K562 (cell line): ENCODE measurements at regions of chr7 and their contacts with region 1.

Region 1: DNA sequence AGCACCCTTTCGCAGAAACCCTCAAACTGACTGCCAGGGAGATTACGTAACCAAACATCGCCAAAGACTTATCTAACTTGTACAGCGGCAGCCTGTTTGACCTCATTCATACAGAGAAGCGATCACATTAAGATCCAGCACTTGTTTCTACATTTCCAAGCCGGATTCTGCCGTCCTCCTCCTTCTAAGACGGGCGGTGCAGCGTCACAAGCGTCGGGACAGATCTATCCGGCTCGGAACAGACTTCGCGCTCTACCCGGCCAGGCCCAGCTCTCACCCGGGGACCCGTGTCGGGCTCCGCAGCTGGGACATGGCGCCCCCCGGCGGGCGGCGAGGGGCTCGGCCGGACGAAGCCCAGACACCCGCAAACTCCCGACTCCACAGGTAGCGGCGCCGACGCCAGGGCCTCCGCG is 373 bp downstream of the H2AZ2 start:
- DNase-seq: peak; percentile 87 to 91 (median 89)
- ATAC-seq: peak; percentile 75
- H3K4me3 ChIP-seq: peak overlapping the region; percentile 72
- H3K27ac ChIP-seq: peak overlapping the region; percentile 98
- H3K4me1 ChIP-seq: peaks cover 15% of the 10 kb centered on the region in 2 experiments; a peak in 4 of 5 replicates
- H3K27me3 ChIP-seq: no peaks in the 10 kb centered on the region
- CTCF ChIP-seq: peak; percentile 76 to 81 (median 79)
- EP300 ChIP-seq: peak; percentile 88; the same call in 1 of the 2 replicates
- POLR2A ChIP-seq: peak; percentile 65
- RAD21 ChIP-seq: peak; percentile 76 to 88

Region 2: DNA sequence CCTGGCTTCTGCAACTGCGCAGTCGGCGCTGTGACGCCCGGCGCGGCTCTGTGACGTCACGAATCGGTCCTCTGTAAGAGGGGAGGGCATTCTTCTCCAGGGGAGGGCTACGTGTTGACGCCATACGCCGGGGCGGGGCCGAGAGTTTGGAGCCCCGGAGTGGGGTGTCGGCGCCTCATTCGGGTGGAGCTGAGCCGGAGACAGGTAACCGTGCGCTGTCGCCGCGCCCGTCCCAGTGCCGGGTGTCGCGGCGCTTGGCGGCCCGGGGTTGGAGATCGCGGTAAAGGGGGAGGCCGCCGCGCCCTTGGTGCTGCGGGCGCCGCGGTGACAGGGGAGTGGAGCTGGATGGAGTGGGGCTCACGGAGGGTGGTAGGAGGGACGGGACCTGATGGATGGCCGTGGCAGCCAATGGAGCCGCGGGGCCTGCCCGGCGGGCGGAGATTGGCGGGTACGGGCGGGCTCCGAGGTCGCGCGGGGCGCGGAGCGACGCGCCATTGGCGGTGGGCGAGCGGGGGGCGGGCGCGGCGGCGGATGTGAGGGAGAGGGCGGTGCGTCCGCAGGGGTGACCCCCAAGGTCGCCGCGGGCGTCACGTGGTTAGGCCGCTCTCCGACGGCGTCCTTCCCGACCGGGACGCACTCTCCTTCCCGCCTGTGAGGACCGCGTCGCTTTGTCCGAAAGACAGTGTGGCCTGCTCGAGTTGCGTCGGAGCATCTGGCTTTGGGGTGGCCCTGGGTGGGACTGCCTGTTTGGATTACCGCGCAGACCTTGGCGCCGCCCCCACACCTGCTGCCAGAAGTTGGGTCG is 240.9 kb before region 1 on chr7 and contains the start of gene OGDH:
- CTCF ChIA-PET with region 1: no interaction called
- POLR2A ChIA-PET with region 1: interaction called, 9 read pairs
- in situ Hi-C with region 1: no loop called
- intact Hi-C with region 1: loop called (anchors 1 kb)
- DNase-seq: peak; percentile 99
- ATAC-seq: peak; percentile 99
- H3K4me3 ChIP-seq: peak within 1 kb of the TSS; percentile 77
- H3K27ac ChIP-seq: peak within 1 kb of the TSS; percentile 84
- H3K4me1 ChIP-seq: peaks cover 8 to 27% of the 10 kb centered on the region in 2 experiments; a peak in 4 of 5 replicates
- H3K27me3 ChIP-seq: no peaks in the 10 kb centered on the region
- CTCF ChIP-seq: no peak
- EP300 ChIP-seq: no peak
- POLR2A ChIP-seq: peak; percentile 98
- RAD21 ChIP-seq: no peak
- polyA plus RNA-seq, gene OGDH: 3.1 to 6.3 TPM

Region 3: DNA sequence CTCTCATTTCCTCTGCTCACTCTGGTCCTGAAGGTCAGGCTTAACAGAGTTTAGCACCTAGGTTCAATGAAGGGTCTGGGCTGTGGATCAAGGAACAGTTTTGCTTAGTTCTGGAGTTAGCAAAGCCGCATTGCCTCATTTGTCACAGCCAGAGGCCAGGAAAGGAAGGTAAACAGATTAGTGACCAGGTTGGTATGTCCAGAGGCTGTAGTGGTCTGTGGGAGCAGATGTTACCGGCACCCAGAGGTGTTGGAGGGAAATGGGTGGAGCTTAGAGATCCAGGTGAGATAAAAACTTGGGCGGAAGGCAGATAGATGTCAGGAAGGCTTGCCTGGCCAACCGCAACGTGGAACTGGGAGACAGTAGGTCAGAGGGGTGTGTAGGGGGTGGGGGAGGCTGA is 135.5 kb before region 1 on chr7:
- CTCF ChIA-PET with region 1: no interaction called
- POLR2A ChIA-PET with region 1: no interaction called
- in situ Hi-C with region 1: no loop called
- intact Hi-C with region 1: no loop called
- DNase-seq: peak; percentile 26 to 59 (median 50)
- ATAC-seq: peak; percentile 52
- H3K4me3 ChIP-seq: no peak overlapping the region
- H3K27ac ChIP-seq: no peak overlapping the region
- H3K4me1 ChIP-seq: peaks cover 12 to 13% of the 10 kb centered on the region in 2 experiments; a peak in 4 of 5 replicates
- H3K27me3 ChIP-seq: no peaks in the 10 kb centered on the region
- CTCF ChIP-seq: no peak
- EP300 ChIP-seq: no peak
- POLR2A ChIP-seq: no peak
- RAD21 ChIP-seq: no peak

Region 4: DNA sequence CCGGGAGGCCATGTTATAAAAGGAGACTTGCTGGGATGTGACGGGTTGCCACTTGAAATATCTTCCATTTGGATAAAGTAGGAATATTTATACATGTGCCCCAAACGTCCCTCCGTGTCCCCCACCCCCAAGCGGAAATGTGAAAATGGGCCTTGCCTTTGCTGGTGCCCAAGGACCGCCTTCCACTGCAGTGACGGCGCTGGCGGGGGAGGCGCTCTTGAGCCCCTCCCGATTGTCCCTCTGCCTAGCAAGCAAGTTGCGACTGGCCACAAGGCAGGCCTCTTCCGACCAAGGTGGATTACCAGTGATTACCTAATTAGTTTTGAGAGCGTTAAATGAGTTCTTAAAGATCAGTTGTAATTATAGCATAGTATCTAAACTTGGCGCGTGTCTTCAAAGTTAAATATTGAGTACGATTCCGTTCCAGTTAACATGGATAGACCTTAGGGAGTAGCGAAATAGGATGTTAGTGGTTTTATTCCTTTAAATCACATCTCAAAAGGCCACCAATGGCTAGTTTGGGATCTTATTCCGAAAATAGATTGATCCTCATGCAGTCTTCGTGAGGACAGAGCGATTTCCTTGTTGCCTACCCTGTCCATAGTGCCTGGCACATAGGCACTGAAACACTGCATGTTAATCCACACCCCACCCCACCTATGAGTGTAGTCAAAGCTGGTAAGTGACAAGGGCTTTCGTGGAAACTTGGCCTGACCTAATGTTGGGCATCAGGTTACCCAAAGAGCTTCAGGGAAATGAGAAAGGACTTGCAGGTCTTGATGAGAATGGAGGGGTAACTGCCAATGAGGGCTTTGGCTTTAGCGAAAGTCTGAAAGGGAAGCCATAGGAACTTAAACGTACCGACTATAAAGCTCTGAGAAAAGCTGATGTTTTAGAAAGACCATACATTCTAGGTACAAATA is 49.9 kb before region 1 on chr7:
- CTCF ChIA-PET with region 1: interaction called, 3 read pairs
- POLR2A ChIA-PET with region 1: interaction called, 5 read pairs
- in situ Hi-C with region 1: no loop called
- intact Hi-C with region 1: loop called (anchors 2 kb)
- DNase-seq: peak; percentile 65 to 94 (median 73)
- ATAC-seq: peak; percentile 82
- H3K4me3 ChIP-seq: peak overlapping the region; percentile 56
- H3K27ac ChIP-seq: peak overlapping the region; percentile 98
- H3K4me1 ChIP-seq: peaks cover 12 to 25% of the 10 kb centered on the region in 2 experiments; a peak in 4 of 5 replicates
- H3K27me3 ChIP-seq: no peaks in the 10 kb centered on the region
- CTCF ChIP-seq: peak; percentile 62 to 76 (median 67)
- EP300 ChIP-seq: no peak
- POLR2A ChIP-seq: no peak; the same call in 1 of the 2 replicates
- RAD21 ChIP-seq: peak; percentile 34 to 45; a peak in 3 of 4 replicates

Region 5: DNA sequence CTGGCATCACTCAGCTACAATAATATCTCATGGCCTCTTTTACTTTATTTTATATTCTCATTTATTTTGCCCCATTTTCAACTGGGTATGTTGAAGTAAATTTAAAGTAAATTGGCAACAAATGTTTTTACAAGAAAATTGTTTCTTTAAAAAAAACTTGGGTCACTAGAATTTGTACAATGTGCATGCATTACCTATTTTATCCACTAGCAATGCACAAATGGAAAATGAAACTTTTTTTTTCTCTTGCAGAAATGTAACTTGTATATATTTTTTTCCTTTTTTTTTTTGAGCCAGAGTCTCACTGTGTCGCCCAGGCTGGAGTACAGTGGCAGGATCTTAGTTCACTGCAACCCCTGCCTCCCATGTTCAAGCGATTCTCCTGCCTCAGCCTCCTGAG is 10.6 kb after region 1 on chr7:
- CTCF ChIA-PET with region 1: no interaction called
- POLR2A ChIA-PET with region 1: interaction called, 38 read pairs
- in situ Hi-C with region 1: no loop called
- intact Hi-C with region 1: no loop called
- DNase-seq: no peak
- ATAC-seq: no peak
- H3K4me3 ChIP-seq: no peak overlapping the region
- H3K27ac ChIP-seq: no peak overlapping the region
- H3K4me1 ChIP-seq: peaks cover 0 to 4% of the 10 kb centered on the region in 2 experiments; a peak in 2 of 5 replicates
- H3K27me3 ChIP-seq: no peaks in the 10 kb centered on the region
- CTCF ChIP-seq: no peak; a peak in 1 of 6 replicates
- EP300 ChIP-seq: no peak
- POLR2A ChIP-seq: no peak
- RAD21 ChIP-seq: no peak

Region 6: DNA sequence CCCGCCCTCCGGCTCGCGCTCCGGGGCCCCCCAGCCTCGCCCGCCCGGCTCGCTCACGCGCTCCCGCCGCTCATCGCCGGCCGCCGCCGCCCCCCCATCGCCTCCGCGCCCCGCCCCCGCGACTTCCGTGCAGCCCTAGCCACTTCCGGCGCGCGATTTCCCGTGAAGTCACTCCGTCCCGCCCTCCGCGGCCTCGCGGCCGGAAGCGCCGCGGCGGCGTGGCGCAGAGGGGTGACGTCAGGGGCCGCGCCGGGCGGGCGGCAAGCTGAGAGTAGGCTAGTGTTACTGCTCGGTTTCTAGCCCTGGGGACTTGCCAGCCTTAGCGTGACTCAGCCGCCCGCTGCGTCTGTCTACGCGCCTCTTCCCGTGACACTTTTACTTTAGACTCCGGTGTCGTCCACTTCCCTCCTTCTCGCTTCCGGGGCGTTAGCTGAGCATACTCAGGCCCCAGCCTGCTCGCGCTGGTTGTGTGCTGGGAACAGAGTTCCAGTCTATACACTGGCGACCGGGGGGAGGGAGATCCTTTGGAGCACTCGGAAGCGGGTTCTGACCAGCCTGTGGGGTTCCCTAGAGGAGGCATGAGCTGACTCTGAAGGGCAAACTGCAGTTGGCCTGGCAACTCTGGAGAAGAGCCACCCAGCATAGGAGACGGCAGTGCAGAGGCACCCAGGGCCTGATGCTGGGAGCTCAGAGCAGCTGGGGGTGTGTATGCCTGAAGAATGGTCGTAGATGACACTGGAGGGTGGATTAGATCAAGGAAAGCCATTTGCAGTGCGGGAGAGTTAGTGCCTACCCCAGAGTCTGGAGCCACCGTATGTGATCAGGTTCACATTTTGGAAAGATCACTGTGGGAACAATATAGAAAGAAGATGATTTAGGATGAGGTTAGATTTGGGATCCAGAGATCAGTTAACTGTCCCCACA is 38.1 kb after region 1 on chr7 and contains the start of gene PURB:
- CTCF ChIA-PET with region 1: interaction called, 4 read pairs
- POLR2A ChIA-PET with region 1: interaction called, 43 read pairs
- in situ Hi-C with region 1: no loop called
- intact Hi-C with region 1: loop called (anchors 2 kb)
- DNase-seq: peak; percentile 91 to 97 (median 94)
- ATAC-seq: peak; percentile 88
- H3K4me3 ChIP-seq: peak within 1 kb of the TSS; percentile 78
- H3K27ac ChIP-seq: peak within 1 kb of the TSS; percentile 100
- H3K4me1 ChIP-seq: peaks cover 16 to 29% of the 10 kb centered on the region in 2 experiments
- H3K27me3 ChIP-seq: no peaks in the 10 kb centered on the region
- CTCF ChIP-seq: no peak
- EP300 ChIP-seq: peak; percentile 60
- POLR2A ChIP-seq: peak; percentile 98
- RAD21 ChIP-seq: no peak; a peak in 1 of 4 replicates
- polyA plus RNA-seq, gene PURB: 1.6 TPM

Region 7: DNA sequence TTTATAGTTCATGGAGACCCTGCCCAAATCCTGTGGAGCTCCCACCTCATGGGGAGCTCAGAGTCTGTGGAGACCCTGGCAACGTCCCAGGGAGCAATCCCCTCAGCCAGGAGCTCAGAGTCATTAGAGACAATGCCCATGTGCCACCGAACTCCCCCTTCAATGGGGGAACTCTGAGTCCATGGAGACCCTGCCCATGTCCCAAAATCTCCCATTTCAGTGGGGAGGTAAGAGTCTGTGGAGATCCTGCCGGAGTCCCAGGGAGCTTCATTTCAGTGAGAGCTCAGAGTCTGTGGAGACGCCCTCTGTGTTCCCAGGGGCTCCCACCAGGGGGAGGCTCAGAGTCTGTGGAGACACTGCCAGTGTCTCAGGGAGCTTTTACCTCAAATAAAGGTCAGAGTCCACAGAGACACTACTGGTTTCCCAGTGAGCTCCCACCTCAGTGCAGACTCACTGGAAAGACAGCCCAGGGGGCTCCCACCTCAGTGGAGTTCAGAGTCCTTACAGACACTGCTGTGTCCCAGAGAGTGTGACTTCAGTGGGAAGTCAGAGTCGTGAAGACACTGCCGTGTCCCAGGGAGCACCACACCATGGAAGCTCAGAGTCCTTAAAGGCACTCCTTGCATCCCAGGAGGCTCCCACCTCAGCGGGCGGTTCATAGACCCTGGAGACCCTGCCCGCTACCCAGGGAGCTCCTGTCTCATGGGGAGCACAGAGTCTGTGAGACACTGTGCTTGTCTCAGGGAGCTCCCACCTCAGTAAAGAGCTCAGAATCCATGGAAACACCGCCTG is 126.3 kb after region 1 on chr7:
- CTCF ChIA-PET with region 1: no interaction called
- POLR2A ChIA-PET with region 1: interaction called, 13 read pairs
- in situ Hi-C with region 1: no loop called
- intact Hi-C with region 1: no loop called
- DNase-seq: peak; percentile 65 to 85 (median 74)
- ATAC-seq: peak; percentile 94
- H3K4me3 ChIP-seq: no peak overlapping the region
- H3K27ac ChIP-seq: no peak overlapping the region; the same call in 2 of the 3 replicates
- H3K4me1 ChIP-seq: peaks cover 21 to 55% of the 10 kb centered on the region in 2 experiments; a peak in 4 of 5 replicates
- H3K27me3 ChIP-seq: no peaks in the 10 kb centered on the region
- CTCF ChIP-seq: peak; percentile 85 to 96 (median 94)
- EP300 ChIP-seq: no peak
- POLR2A ChIP-seq: no peak
- RAD21 ChIP-seq: peak; percentile 85 to 93